ENCODE measurements at regions of chr18 and their contacts with region 1.

Region 1: DNA sequence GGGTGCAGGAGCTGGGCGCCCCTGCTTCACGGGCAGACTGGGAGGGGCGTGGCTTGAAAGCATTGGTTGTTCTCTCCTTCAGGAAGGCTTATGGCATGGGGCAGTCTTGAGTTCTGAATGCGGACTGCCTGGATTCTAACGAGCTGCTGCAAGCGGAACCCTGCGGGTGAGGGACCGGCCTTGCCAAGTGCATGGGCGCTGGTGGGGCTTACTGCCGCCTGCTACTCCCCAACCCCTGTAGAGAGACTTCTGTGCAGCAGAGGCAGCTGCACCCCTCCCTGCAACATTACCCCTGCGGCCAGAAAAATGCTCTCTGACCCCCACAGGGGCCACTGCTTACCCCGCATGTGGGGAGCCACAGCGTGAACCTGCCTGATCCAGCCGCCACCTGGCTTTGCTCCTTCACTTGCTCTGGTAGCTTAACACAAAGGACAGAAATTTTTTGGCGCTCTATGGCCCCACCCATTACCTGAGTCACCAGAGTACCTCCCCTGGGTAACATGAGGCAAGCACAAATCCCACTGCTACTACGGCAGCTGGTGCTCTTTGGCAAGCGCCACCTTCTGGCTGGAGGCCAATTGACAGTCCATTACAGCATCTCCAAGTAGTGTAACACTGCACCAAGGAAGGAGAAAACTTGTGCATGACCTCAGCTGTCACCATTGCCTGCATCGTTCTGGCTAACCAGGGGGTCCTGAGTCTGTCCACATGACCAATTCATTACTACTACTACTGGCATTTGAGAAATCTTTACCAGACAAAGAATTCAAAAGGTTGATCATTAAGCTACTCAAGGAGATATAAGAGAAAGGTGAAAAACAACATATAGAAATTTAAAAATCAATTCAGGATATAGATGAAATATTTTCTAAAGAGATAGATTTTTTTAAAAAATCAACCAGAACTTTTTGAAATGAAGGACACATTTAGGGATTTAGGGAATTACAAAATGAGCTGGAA is 35.4 kb downstream of the MYL12B start:
- DNase-seq: peak; percentile 95
- H3K4me3 Mint-ChIP-seq: peak overlapping the region; percentile 88
- H3K27ac Mint-ChIP-seq: peak overlapping the region; percentile 72
- H3K4me1 Mint-ChIP-seq: peaks cover 9% of the 10 kb centered on the region
- H3K27me3 Mint-ChIP-seq: peaks cover 30% of the 10 kb centered on the region

Region 2: DNA sequence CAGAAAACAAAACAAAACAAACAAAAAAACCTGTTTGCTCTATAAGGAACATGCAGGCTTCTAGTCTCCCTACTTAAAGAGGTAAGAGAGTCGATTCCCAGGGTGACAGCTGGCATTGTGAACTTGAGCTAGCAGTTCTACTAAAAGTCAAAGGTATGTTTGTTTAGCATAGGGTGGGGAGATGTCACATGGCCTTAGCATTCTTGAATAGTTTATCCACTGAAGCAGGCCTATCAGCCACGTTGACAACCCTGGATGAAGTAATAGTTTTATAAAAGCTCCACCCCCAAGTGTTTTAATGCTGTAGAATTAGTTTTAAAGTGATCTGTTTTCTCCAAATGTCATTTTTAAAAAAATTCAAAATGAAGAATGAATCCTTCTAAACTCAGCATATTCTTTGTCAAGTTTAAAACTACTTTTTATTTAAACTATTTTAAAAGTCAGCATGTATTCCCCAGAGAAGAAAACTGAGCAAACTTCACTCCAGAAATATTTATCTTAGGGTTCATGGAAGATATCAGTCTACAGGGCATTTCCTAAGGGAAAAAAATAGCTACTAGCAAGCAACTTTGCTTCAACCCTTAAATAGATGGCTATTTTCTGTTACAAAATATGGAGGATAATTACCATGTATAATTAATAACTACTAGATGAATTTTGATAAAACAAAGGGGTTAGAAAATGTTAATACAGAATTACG is 79.2 kb before region 1 on chr18:
- CTCF ChIA-PET with region 1: no interaction called
- POLR2A ChIA-PET with region 1: no interaction called
- DNase-seq: no peak
- H3K4me3 Mint-ChIP-seq: no peak overlapping the region
- H3K27ac Mint-ChIP-seq: no peak overlapping the region
- H3K4me1 Mint-ChIP-seq: peaks cover 9% of the 10 kb centered on the region
- H3K27me3 Mint-ChIP-seq: no peaks in the 10 kb centered on the region

Region 3: DNA sequence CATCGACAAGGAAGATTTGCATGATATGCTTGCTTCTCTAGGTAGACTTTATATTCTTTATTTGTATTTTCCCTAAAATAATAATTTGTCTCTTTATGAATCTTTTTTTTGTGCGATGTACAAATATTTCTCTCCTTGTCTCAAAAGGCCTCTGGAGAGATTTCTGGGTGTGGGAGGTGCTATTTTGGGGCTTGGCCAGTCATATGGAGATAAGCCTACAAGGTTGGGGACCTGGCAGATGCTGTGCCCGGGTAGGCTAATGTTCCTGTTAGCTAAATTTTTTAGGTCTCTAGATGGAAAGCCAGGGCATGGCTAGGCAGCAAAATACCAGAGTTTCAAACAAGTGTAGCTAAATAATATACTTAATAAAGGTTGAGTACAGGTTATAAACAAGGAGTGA is 24.3 kb before region 1 on chr18:
- CTCF ChIA-PET with region 1: interaction called, 13 read pairs
- POLR2A ChIA-PET with region 1: interaction called, 4 read pairs
- DNase-seq: no peak
- H3K4me3 Mint-ChIP-seq: no peak overlapping the region
- H3K27ac Mint-ChIP-seq: no peak overlapping the region
- H3K4me1 Mint-ChIP-seq: peaks cover 33% of the 10 kb centered on the region
- H3K27me3 Mint-ChIP-seq: no peaks in the 10 kb centered on the region

Region 4: DNA sequence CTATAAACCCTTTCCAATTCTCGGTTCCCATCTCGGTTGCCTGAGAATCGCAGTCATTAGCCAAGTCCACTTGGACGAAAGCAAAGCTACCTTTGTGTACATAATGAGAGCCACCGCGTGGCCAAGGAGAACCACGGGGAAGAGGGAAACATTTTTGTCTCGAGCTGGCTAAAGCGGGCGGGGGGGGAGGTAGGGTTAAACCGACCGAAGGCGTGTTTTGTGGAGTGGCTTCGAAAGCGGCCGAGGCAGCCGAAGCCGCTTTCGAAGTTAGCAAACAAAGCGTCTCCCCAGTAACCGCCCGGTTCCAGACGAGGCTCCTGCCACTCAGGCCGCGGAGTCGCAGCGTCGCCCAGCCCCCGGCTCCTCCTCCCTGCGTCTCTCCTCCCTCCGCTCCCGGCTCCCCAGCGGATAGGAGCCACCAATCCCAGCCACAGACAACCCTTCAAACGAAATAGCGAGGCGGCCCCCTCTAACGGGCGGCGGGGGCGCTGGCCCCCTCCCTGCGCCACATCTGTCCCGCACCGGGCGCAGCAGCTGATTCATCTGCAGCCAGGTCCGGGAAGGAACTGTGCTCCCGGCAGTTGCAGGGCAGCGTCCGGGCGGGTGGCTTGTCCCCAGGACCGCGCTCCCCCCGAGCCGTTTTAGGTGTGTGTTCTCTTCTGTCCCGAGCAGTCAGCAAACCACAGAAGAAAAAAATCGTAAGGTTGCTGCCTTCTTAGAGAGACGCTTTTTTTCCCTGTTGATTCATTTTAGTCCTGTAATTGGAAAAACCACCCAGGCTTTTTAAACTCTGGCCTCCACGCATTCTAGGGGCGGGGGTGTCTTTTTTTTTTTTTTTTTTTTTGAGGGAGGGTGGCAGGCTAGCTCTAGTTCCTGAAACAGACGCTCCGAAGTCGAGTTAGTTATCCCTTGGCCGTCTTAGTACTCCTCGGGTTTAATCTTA is 150.9 kb after region 1 on chr18:
- CTCF ChIA-PET with region 1: interaction called, 11 read pairs
- POLR2A ChIA-PET with region 1: interaction called, 19 read pairs
- DNase-seq: peak; percentile 88
- H3K4me3 Mint-ChIP-seq: peak overlapping the region; percentile 92
- H3K27ac Mint-ChIP-seq: peak overlapping the region; percentile 99
- H3K4me1 Mint-ChIP-seq: peaks cover 31% of the 10 kb centered on the region
- H3K27me3 Mint-ChIP-seq: no peaks in the 10 kb centered on the region

Region 5: DNA sequence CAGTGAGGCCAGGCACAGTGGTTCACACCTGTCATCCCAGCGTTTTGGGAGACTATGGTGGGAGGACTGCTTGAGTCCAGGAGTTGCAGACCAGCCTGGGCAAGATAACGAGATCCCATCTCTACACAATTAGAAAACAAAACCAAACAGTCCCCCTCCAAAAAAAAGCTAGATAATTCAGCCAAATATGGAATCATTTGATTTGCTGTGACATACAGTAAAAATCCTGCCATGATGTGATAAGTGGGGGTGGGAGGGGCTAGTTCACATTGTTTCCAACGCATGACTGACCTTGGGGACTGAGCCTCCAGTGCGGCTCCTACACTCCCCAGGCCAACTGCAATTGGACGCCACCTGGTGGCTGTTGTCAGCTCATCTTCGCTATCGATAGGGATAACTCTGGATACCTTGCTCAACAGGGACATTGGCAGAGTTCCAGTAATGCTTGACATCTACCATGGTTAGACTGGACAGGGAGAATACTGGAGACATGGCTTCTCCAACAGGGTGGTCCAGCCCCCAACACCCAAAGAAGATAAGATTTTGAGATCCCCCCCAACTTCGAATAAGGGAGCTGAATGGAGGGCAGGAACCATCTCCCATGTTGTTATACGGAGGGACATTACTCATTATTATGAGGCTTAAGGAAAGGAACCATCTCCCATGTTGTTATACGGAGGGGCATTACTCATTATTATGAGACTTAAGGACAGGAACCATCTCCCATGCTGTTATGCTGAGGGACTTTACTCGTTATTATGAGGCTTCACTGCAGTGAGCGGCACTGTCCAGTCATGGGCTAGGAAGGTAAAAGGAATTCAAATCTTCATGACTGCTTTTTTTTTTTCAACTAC is 288.6 kb after region 1 on chr18:
- CTCF ChIA-PET with region 1: interaction called, 12 read pairs
- POLR2A ChIA-PET with region 1: interaction called, 3 read pairs
- DNase-seq: peak; percentile 79
- H3K4me3 Mint-ChIP-seq: no peak overlapping the region
- H3K27ac Mint-ChIP-seq: no peak overlapping the region
- H3K4me1 Mint-ChIP-seq: peaks cover 37% of the 10 kb centered on the region
- H3K27me3 Mint-ChIP-seq: no peaks in the 10 kb centered on the region

Region 6: DNA sequence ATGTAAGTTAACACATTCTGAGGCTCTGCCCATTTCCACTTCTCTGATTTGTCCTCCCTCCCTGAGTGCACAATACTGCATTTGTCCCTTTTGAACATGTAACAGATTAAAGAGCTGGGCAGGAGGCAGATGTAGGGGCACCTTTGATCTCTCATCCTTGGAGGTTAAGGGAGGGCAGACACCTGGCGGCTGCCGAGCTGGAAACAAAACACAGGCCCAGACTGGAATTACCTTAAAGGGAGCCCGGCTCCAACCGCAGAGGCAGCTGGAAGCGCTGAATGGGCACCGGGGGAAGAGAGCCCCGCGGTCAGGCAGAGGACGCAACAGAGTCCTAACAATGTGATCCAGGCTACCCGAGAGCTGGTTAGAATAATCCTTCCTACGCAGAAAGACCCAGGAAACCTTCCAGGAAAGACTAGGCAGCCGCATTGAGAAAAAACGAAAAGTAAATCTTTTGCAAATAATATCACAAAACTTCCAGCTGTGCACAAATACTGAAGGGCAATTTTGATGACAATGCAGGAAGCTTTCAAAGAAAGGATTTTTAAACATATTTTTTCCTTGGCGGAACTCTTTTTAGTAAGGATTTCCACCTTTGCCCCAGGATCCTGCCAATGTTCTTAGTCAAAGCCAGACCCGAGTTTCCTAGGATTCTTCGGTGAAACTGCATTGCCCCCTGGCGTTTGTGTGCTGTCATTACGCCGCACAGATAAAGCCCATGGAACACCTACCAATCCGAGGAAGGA is 368.6 kb after region 1 on chr18:
- CTCF ChIA-PET with region 1: interaction called, 35 read pairs
- POLR2A ChIA-PET with region 1: interaction called, 16 read pairs
- DNase-seq: peak; percentile 76
- H3K4me3 Mint-ChIP-seq: no peak overlapping the region
- H3K27ac Mint-ChIP-seq: no peak overlapping the region
- H3K4me1 Mint-ChIP-seq: peaks cover 26% of the 10 kb centered on the region
- H3K27me3 Mint-ChIP-seq: no peaks in the 10 kb centered on the region

Region 7: GRCh38 chr18:3760741-3761140 is 463.4 kb after region 1 on chr18:
- CTCF ChIA-PET with region 1: no interaction called
- POLR2A ChIA-PET with region 1: no interaction called
- DNase-seq: no peak
- H3K4me3 Mint-ChIP-seq: no peak overlapping the region
- H3K27ac Mint-ChIP-seq: no peak overlapping the region
- H3K4me1 Mint-ChIP-seq: no peaks in the 10 kb centered on the region
- H3K27me3 Mint-ChIP-seq: peaks cover 2% of the 10 kb centered on the region

Measured in activated CD4-positive, alpha-beta memory T cell treated with anti-CD3 and anti-CD28 coated beads, Interleukin-2, amount 10 ng/mL, durations not matched to agents 7 days and 5 days (primary cell).